ENCODE measurements at regions of chr17 and their contacts with region 1.

Region 1: DNA sequence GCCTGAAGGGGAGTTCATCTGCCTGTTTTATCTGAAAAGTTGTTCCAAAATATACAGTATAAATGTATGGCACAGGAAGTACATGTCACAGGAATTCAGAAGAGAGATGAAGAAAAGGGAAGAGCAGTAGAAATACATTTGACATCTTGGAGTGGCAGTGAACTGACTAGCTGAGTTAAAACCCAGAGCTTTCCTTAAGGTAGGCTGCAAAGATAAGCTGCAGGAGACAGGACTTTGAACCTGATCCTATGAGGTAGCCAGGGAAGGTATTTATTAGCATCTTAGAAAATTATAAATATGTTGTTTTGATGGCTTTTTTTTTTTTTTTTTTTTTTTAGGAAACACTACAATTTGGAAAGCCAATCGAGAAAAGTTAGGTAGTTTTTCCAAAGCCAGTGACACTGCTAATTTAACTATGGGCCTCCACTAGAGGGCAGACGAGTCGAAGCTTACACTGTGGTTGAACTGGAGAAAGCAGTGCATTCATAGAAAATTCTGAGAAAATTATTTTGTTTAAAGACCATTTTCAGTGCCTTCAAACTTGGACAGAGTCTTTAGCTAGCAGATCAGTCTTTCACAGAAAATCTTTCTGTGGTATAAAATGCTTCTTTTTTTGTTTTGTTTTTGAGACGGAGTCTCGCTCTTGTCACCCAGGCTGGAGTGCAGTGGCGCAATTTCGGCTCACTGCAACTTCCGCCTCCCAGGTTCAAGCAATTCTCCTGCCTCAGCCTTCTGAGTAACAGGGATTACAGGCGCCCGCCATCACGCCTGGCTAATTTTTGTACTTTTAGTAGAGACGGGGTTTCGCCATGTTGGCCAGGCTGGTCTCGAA is 122.3 kb downstream of the SSH2 start:
- DNase-seq: peak; percentile 78
- ATAC-seq: peak; percentile 78
- H3K4me3 Mint-ChIP-seq: no peak overlapping the region
- H3K27ac Mint-ChIP-seq: no peak overlapping the region
- H3K4me1 Mint-ChIP-seq: peaks cover 19% of the 10 kb centered on the region
- H3K27me3 Mint-ChIP-seq: no peaks in the 10 kb centered on the region

Region 2: DNA sequence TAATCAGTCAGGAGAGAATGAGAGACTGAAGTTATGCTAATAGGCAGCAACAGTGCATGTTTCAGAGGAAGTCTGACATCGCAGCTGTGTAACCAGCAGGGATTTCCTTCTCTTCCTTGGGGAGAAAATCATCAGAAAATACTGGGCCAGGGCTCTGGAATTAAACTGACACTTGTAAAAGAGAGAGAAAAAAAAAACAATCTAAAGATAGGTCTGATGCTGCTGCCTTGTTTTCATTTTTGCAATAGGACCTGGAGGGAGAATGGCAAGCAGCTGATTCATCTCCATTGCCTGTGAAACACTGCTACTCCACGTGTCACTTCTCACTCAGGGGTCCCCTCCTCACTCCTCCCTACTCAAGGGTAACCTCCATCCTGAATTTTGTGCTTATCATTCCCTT is 167.3 kb before region 1 on chr17:
- CTCF ChIA-PET with region 1: interaction called, 13 read pairs
- DNase-seq: no peak
- ATAC-seq: no peak
- H3K4me3 Mint-ChIP-seq: no peak overlapping the region
- H3K27ac Mint-ChIP-seq: peak overlapping the region; percentile 42
- H3K4me1 Mint-ChIP-seq: peaks cover 21% of the 10 kb centered on the region
- H3K27me3 Mint-ChIP-seq: no peaks in the 10 kb centered on the region

Region 3: GRCh38 chr17:29820425-29820824 is 12.7 kb after region 1 on chr17:
- CTCF ChIA-PET with region 1: interaction called, 11 read pairs
- DNase-seq: no peak
- ATAC-seq: no peak
- H3K4me3 Mint-ChIP-seq: no peak overlapping the region
- H3K27ac Mint-ChIP-seq: no peak overlapping the region
- H3K4me1 Mint-ChIP-seq: peaks cover 5% of the 10 kb centered on the region
- H3K27me3 Mint-ChIP-seq: no peaks in the 10 kb centered on the region

Region 4: GRCh38 chr17:30021708-30022317 is 214.1 kb after region 1 on chr17:
- CTCF ChIA-PET with region 1: interaction called, 13 read pairs
- DNase-seq: peak; percentile 47
- ATAC-seq: no peak
- H3K4me3 Mint-ChIP-seq: no peak overlapping the region
- H3K27ac Mint-ChIP-seq: no peak overlapping the region
- H3K4me1 Mint-ChIP-seq: peaks cover 1% of the 10 kb centered on the region
- H3K27me3 Mint-ChIP-seq: peaks cover 13% of the 10 kb centered on the region